AG04450 (cell line): ENCODE measurements at regions of chr3 and their contacts with region 1.

Region 1: GRCh38 chr3:8769088-8769822 is at the start of gene OXTR:
- DNase-seq: peak; percentile 69
- H3K4me3 ChIP-seq: peak within 1 kb of the TSS; percentile 66
- H3K27ac ChIP-seq: peak within 1 kb of the TSS; percentile 57
- H3K27me3 ChIP-seq: no peaks in the 10 kb centered on the region
- CTCF ChIP-seq: peak; percentile 98
- polyA plus RNA-seq, gene OXTR: 57.2 and 58.7 TPM in 2 replicates

Region 2: GRCh38 chr3:7134234-7134633 is 1635.0 kb before region 1 on chr3:
- CTCF ChIA-PET with region 1: no interaction called
- POLR2A ChIA-PET with region 1: no interaction called
- DNase-seq: no peak
- H3K4me3 ChIP-seq: no peak overlapping the region
- H3K27ac ChIP-seq: no peak overlapping the region
- H3K27me3 ChIP-seq: no peaks in the 10 kb centered on the region
- CTCF ChIP-seq: no peak

Region 3: DNA sequence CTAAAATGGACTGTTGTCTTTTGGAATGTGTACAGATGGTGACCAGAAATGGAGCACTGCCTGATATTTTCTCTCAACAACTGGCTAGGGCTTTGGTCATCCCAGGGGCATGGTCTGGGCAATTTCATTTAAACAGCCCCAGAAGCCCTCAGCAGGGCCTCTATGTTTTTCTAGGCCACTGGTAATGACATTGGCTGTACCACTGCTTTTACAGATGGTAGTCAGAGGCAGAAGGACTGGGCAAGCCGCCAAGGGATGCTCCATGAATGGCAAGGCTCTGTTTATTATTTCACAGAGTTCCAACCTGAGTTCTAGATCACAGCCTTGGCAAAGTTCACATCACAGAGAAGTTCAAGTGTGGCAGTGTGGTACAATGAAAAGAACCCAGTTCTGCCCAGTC is 304.6 kb before region 1 on chr3:
- CTCF ChIA-PET with region 1: no interaction called
- POLR2A ChIA-PET with region 1: no interaction called
- DNase-seq: no peak
- H3K4me3 ChIP-seq: no peak overlapping the region
- H3K27ac ChIP-seq: no peak overlapping the region
- H3K27me3 ChIP-seq: no peaks in the 10 kb centered on the region
- CTCF ChIP-seq: no peak

Region 4: GRCh38 chr3:8501371-8502131 is 267.7 kb before region 1 on chr3 and contains the start of gene LMCD1:
- CTCF ChIA-PET with region 1: no interaction called
- POLR2A ChIA-PET with region 1: no interaction called
- DNase-seq: peak; percentile 89
- H3K4me3 ChIP-seq: peak within 1 kb of the TSS; percentile 64
- H3K27ac ChIP-seq: peak within 1 kb of the TSS; percentile 94
- H3K27me3 ChIP-seq: no peaks in the 10 kb centered on the region
- CTCF ChIP-seq: peak; percentile 38
- polyA plus RNA-seq, gene LMCD1: 39.1 and 49.5 TPM in 2 replicates

Region 5: DNA sequence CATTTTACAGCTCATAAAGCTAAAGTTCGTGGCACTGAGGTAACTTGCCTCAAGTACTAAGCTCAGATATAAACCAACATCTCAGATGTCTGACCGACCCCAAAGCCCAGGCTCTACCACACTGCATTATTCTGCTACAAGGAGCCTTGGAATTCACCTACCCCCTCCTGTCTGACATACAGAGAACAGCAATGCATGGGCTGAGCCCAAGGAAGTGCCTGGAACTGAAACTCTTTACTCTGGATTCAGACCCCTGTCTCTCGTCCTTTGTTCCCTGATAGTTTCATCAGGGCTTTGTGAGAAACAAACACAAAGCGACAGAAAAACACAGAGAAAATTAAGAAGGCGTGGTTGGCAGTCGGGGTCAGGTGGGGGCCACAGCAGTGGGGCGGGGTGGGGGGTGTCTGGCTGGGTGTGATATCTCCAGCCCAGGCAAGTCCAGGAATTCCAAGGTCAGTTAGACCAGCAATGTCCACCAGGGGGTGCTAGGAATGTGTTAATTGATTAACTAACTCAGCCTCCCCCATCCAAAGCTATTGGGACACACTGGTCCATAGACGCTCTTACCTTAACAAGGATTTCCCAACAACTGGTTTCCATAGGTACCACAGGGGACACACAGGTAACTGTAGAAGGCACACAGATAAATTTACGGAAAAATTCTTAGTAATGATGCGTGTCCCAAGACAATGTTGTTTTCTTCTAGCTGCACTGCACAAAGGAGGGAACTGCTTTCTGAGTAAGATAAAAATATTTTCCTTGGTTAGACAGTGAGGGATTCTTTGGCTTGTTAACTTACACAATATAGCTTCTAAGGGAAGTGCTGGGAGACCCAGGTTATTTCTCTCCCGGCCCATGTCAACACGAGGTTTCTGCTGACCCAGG is 105.8 kb before region 1 on chr3:
- CTCF ChIA-PET with region 1: interaction called, 20 read pairs
- POLR2A ChIA-PET with region 1: no interaction called
- DNase-seq: peak; percentile 23
- H3K4me3 ChIP-seq: no peak overlapping the region
- H3K27ac ChIP-seq: no peak overlapping the region
- H3K27me3 ChIP-seq: no peaks in the 10 kb centered on the region
- CTCF ChIP-seq: peak; percentile 68

Region 6: GRCh38 chr3:8784676-8785435 is 15.6 kb after region 1 on chr3:
- CTCF ChIA-PET with region 1: interaction called, 20 read pairs
- POLR2A ChIA-PET with region 1: no interaction called
- DNase-seq: no peak
- H3K4me3 ChIP-seq: no peak overlapping the region
- H3K27ac ChIP-seq: no peak overlapping the region
- H3K27me3 ChIP-seq: no peaks in the 10 kb centered on the region
- CTCF ChIP-seq: no peak

Region 7: GRCh38 chr3:8875836-8876235 is 106.6 kb after region 1 on chr3:
- CTCF ChIA-PET with region 1: interaction called, 15 read pairs
- POLR2A ChIA-PET with region 1: no interaction called
- DNase-seq: peak; percentile 34
- H3K4me3 ChIP-seq: no peak overlapping the region
- H3K27ac ChIP-seq: no peak overlapping the region
- H3K27me3 ChIP-seq: no peaks in the 10 kb centered on the region
- CTCF ChIP-seq: no peak

Region 8: DNA sequence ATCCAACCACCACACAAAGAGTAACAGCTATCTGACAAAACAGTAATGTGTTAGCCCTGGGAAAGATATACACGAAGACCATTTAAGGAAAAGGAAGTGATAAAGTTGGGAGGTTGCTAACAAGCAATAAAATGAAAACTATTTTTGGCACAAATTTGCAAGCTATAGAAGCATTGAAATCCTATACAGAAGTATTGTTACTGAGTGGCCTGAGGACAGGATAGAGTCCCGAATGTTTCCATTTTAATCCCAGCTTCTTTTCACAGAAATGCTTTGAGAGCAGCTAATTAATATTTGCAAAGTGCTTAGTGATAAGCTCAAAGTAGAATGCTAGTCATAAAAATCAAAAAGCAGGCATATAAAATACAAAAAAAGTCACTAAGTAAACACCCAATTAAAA is 142.5 kb after region 1 on chr3:
- CTCF ChIA-PET with region 1: interaction called, 13 read pairs
- POLR2A ChIA-PET with region 1: interaction called, 4 read pairs
- DNase-seq: no peak
- H3K4me3 ChIP-seq: no peak overlapping the region
- H3K27ac ChIP-seq: no peak overlapping the region
- H3K27me3 ChIP-seq: no peaks in the 10 kb centered on the region
- CTCF ChIP-seq: no peak

Region 9: DNA sequence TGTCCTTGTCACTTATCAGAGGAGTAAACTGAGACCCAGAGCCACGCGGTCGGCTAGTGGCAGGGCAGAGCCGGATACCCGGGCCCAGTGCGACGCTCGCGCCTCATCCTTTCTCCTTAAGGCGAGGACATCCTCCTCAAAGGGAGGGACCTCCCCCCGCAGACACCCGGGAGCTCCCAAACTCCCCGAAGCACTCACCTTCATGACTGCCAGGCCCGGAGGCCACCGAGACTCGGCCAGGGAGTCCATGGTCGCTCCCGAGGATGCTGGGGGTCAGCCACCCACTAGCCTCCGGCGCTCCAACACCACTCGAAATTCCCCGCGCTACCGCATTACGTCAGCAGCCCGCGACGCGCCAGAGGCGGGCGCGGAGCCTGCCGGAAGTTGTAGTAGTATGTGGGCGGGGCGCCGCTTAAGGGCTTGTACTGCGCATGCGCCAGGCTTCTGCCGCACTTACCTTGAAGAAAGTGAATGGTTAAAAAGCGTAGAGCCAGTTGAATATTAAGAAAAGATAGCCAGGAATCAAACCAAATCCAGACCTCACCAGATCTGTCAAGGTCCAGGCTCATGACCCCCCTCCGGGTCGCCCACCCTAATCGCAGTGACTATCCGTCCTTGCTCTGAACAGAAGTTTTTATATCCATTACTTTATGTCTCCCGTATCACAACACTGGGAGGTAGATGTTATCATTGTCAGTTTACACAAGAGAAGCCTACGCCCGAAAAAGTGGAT is 194.0 kb after region 1 on chr3 and contains the start of gene RAD18:
- CTCF ChIA-PET with region 1: interaction called, 59 read pairs
- POLR2A ChIA-PET with region 1: no interaction called
- DNase-seq: peak; percentile 79
- H3K4me3 ChIP-seq: peak within 1 kb of the TSS; percentile 87
- H3K27ac ChIP-seq: peak within 1 kb of the TSS; percentile 55
- H3K27me3 ChIP-seq: no peaks in the 10 kb centered on the region
- CTCF ChIP-seq: no peak
- polyA plus RNA-seq, gene RAD18: 6.7 and 10.7 TPM in 2 replicates